GM12878 (cell line): ENCODE measurements at regions of chr16 and their contacts with region 1.

Region 1: GRCh38 chr16:3112058-3112880 is at the start of gene ZNF205:
- DNase-seq: no peak
- ATAC-seq: peak; percentile 44
- H3K4me3 ChIP-seq: peak within 1 kb of the TSS; percentile 55
- H3K27ac ChIP-seq: no peak within 1 kb of the TSS; the same call in 1 of the 2 replicates
- H3K4me1 ChIP-seq: no peaks in the 10 kb centered on the region; the same call in 1 of the 2 replicates
- H3K27me3 ChIP-seq: no peaks in the 10 kb centered on the region; a peak in 1 of 4 replicates
- CTCF ChIP-seq: no peak
- EP300 ChIP-seq: no peak
- POLR2A ChIP-seq: no peak
- RAD21 ChIP-seq: no peak
- polyA plus RNA-seq, gene ZNF205: not detected

Region 2: GRCh38 chr16:3099732-3100499 is 12.4 kb before region 1 on chr16:
- CTCF ChIA-PET with region 1: interaction called, 7 read pairs
- POLR2A ChIA-PET with region 1: interaction called, 11 read pairs
- RAD21 ChIA-PET with region 1: no interaction called
- SMC1A ChIA-PET with region 1: interaction called, 7 read pairs
- in situ Hi-C with region 1: no loop called
- intact Hi-C with region 1: no loop called
- DNase-seq: no peak
- ATAC-seq: peak; percentile 92
- H3K4me3 ChIP-seq: peak overlapping the region; percentile 35; the same call in 1 of the 2 replicates
- H3K27ac ChIP-seq: no peak overlapping the region
- H3K4me1 ChIP-seq: peaks cover 29% of the 10 kb centered on the region
- H3K27me3 ChIP-seq: no peaks in the 10 kb centered on the region
- CTCF ChIP-seq: no peak
- EP300 ChIP-seq: no peak
- POLR2A ChIP-seq: peak; percentile 39; the same call in 1 of the 2 replicates
- RAD21 ChIP-seq: no peak